ENCODE measurements at regions of chr15 and their contacts with region 1.

Region 1: GRCh38 chr15:77959432-77959879 is 118.1 kb downstream of the TBC1D2B start:
- DNase-seq: peak; percentile 80
- H3K4me3 ChIP-seq: peak overlapping the region; percentile 35
- H3K27ac ChIP-seq: no peak overlapping the region
- H3K4me1 ChIP-seq: no peaks in the 10 kb centered on the region
- H3K27me3 ChIP-seq: no peaks in the 10 kb centered on the region
- CTCF ChIP-seq: peak; percentile 94

Region 2: DNA sequence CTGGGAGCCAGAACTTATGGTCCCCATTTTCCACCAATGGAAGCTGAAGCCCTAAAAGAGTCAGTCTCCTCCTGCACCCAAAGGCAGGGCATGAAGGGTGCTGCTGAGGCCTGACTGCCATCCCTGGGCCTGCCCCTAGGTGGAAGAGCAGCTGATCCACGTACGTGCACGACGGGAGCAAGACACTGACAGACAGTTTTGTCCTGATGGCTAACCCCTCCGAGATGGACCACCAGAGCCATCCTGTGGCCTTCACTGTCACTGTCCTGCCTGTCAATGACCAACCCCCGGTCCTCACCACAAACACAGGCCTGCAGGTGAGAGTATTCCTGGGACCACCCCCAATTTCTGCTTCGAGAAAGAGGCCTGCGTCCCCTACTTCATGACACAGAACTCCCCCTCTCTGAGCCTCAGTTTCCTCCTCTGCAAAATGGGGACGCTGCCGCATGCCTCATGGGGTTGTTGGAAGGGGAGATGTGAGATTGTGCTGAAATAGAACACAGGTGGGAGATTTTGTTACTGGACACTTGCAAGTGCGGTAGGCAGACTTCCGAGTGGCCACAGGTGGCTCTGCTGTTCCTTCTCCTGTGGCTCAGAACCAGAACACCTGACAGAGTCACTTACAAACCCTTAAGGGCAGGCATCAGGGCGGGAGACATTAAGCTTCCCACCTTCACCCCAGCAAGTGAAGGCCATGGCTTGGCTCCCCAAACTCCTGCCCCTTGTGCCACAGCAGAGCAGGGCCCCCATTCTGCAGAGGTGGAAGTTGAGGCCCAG is 57.3 kb before region 1 on chr15:
- CTCF ChIA-PET with region 1: no interaction called
- POLR2A ChIA-PET with region 1: no interaction called
- intact Hi-C with region 1: loop called (anchors 5 kb)
- DNase-seq: no peak
- H3K4me3 ChIP-seq: no peak overlapping the region
- H3K27ac ChIP-seq: no peak overlapping the region
- H3K4me1 ChIP-seq: no peaks in the 10 kb centered on the region
- H3K27me3 ChIP-seq: no peaks in the 10 kb centered on the region
- CTCF ChIP-seq: no peak

Region 3: DNA sequence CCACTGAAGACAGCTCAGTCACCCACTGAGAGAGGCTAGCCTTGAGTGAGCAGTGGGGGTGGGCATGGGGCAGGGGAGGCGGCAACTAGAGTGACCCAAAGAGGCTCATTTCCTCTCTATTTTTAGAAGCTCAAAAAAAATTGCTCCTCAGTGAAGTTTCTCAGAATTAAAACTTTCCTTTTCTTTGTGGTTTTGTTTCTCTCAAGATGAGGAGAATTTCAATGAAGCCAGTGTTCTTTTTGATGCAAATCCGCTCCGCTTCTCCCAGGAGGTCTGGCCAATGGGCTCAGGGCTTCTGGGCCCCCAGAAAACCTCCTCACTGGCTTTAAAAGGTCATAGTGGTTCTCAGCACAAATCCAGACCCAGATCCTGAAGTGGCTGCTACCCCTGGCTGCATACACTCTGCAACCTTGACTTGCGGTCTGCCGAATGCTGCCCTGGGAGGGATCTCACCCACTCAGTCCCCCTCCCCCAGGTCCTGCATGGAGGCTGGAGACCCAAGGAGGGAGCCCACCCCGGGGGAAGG is 275.1 kb after region 1 on chr15 and contains the start of gene ACSBG1:
- CTCF ChIA-PET with region 1: no interaction called
- POLR2A ChIA-PET with region 1: no interaction called
- intact Hi-C with region 1: no loop called
- DNase-seq: no peak
- H3K4me3 ChIP-seq: no peak within 1 kb of the TSS
- H3K27ac ChIP-seq: no peak within 1 kb of the TSS
- H3K4me1 ChIP-seq: no peaks in the 10 kb centered on the region
- H3K27me3 ChIP-seq: no peaks in the 10 kb centered on the region
- CTCF ChIP-seq: no peak
- total RNA-seq, gene ACSBG1: 0.35 and 0.45 TPM in 2 replicates

Measured in A673 (cell line).